ENCODE measurements at regions of chr6 and their contacts with region 1.

Region 1: GRCh38 chr6:32692019-32692418 is 25.6 kb upstream of the HLA-DQB1 start:
- DNase-seq: peak in 2 of 3 donors; percentile 42 to 58
- ATAC-seq: peak; percentile 83
- H3K4me3 ChIP-seq: no peak overlapping the region
- H3K4me1 ChIP-seq: no peaks in the 10 kb centered on the region
- CTCF ChIP-seq: peak; percentile 17

Region 2: GRCh38 chr6:32244946-32245398 is 447.0 kb before region 1 on chr6:
- intact Hi-C with region 1: loop called in 1 of 2 experiments (anchors 10 kb)
- DNase-seq: peak; percentile 71 to 80 (median 79)
- ATAC-seq: peak; percentile 84
- H3K4me3 ChIP-seq: no peak overlapping the region
- H3K4me1 ChIP-seq: no peaks in the 10 kb centered on the region
- CTCF ChIP-seq: peak; percentile 65